ENCODE measurements at regions of chr18 and their contacts with region 1.

Region 1: GRCh38 chr18:20988726-20989125 is 122.9 kb downstream of the ROCK1 start:
- H3K4me3 Mint-ChIP-seq: no peak overlapping the region
- H3K27ac Mint-ChIP-seq: no peak overlapping the region
- H3K4me1 Mint-ChIP-seq: no peaks in the 10 kb centered on the region
- H3K27me3 Mint-ChIP-seq: no peaks in the 10 kb centered on the region

Region 2: DNA sequence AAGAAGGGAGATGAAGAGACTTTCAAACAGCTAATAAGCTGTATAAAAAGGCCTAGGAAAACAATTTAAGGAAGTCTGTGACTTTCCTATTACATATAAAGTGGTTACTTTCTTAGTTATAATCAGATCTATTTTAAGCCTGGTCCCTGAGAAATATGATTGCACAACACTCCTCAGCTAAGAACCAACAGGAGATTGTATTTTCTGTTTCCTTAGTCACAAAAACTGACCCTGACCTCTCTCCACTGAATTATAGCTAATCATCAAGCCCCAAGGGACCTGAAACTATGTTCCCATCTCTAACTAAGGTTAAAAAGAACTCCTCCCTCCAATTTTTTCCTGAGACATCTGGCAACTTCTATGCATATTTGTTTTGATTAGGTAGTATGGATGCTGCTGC is 16.0 kb after region 1 on chr18:
- intact Hi-C with region 1: no loop called
- H3K4me3 Mint-ChIP-seq: no peak overlapping the region
- H3K27ac Mint-ChIP-seq: no peak overlapping the region
- H3K4me1 Mint-ChIP-seq: peaks cover 6% of the 10 kb centered on the region
- H3K27me3 Mint-ChIP-seq: no peaks in the 10 kb centered on the region

Region 3: DNA sequence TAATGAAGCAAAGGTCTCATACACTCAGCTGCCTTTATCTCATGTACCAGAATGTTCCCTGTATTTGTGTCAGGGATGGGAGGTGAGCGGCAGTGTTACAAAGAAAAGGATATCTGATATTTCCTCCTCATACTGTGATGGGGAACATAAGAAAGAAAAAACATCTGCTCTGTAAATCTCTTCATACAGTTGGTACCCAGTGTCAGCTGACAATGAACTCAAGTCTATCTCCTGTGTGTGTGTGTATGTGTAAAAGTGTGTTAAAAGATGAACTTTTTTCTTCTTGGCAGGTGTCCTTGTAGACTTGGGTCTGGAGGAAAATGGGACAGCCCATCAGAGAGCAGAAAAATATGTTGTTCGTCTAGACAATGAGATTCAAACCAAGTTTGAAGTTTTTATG is 484.0 kb after region 1 on chr18:
- intact Hi-C with region 1: no loop called
- H3K4me3 Mint-ChIP-seq: no peak overlapping the region
- H3K27ac Mint-ChIP-seq: no peak overlapping the region
- H3K4me1 Mint-ChIP-seq: no peaks in the 10 kb centered on the region
- H3K27me3 Mint-ChIP-seq: peaks cover 1% of the 10 kb centered on the region

Region 4: GRCh38 chr18:21865043-21865442 is 876.3 kb after region 1 on chr18:
- intact Hi-C with region 1: loop called (anchors 10 kb)
- H3K4me3 Mint-ChIP-seq: no peak overlapping the region
- H3K27ac Mint-ChIP-seq: no peak overlapping the region
- H3K4me1 Mint-ChIP-seq: peaks cover 4% of the 10 kb centered on the region
- H3K27me3 Mint-ChIP-seq: no peaks in the 10 kb centered on the region

Region 5: DNA sequence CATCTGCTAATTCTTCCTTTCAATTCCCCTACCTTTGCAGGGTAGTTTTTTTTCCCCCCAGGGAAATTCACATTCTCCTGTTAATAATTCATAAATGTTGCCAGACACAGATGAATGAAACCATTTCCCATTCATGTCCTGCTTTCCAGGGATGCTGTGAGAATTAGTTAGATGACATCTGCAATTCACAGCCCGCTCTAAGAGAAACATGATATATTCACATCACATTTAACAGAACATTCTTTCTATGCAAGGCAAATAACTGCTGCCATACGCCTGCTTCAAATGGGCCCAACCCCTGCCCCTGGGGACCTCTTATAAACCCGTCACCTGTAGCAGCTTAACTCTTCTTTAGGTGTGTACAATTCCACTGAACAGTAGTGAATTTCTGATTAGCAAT is 1539.6 kb after region 1 on chr18:
- intact Hi-C with region 1: no loop called
- H3K4me3 Mint-ChIP-seq: no peak overlapping the region
- H3K27ac Mint-ChIP-seq: no peak overlapping the region
- H3K4me1 Mint-ChIP-seq: no peaks in the 10 kb centered on the region
- H3K27me3 Mint-ChIP-seq: no peaks in the 10 kb centered on the region